ENCODE measurements at regions of chr1 and their contacts with region 1.

Region 1: DNA sequence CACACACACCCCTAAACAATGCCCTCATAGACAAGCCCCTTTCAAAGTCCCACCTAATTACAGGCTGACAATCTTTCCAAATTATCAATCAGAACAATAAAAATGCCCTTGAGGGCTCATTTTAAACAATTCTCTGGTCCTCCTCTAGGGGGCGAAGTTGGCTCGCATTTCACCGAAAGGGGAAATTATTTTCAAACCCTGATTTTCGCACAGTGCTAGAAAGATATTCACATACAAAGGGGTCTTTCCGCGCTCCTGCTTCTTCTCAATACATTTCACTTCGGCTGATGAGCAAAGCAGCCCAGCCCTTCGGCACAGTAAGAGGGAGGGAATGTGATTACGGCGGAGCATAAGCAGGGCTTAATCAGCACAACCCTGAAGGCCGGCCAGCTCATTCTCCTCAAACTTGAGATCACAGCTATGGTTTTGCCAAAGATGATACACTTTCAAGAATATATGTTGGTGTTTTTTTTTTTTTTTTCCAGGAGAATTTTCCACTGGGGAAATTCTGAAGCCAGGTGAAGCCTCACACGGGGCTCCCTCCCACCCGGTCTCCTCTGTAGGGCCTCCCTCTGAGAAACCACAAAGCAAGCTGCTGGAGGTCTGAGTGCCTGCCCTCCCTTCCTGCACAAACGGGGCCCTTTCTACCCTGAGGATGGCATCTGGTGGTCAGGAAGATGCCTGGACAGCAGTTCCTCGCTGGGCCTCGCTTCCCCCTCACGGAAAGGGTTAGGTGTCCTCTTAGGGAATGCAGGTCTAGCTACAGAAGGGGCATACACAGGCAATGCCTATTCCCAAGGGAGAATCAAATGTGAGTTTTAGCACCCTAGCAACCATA is 66.9 kb downstream of the GNG12 start:
- DNase-seq: peak in 1 of 2 experiments; percentile 53
- ATAC-seq: peak; percentile 69 to 78
- H3K4me3 ChIP-seq: no peak overlapping the region; the same call in 2 of the 3 replicates
- H3K27ac ChIP-seq: peak overlapping the region; percentile 76 to 92
- H3K4me1 ChIP-seq: peaks cover 77% of the 10 kb centered on the region
- CTCF ChIP-seq: peak; percentile 76
- EP300 ChIP-seq: no peak
- POLR2A ChIP-seq: no peak
- RAD21 ChIP-seq: peak; percentile 83 to 89

Region 2: DNA sequence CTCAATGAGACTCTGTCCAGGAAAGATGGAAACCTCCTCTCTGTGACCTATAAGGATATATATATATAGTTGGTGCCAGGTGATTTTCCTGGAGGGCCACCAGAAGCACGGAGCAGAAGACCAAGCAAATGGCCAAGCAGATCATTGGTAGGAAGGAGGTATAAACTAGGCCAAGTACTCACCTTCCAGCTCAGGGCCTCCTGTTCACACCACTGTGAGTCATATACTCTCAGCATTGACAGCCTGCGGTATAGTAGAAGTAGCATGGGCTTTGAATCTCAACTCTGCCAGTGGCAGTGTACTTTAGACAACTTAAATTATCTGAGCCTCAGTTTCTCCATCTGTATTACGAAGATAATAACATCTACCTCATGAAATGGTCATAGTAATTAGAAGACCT is 443.3 kb before region 1 on chr1:
- CTCF ChIA-PET with region 1: no interaction called
- POLR2A ChIA-PET with region 1: no interaction called
- DNase-seq: no peak
- ATAC-seq: no peak
- H3K4me3 ChIP-seq: no peak overlapping the region
- H3K27ac ChIP-seq: no peak overlapping the region
- H3K4me1 ChIP-seq: no peaks in the 10 kb centered on the region
- CTCF ChIP-seq: no peak
- EP300 ChIP-seq: no peak
- POLR2A ChIP-seq: no peak
- RAD21 ChIP-seq: no peak

Region 3: GRCh38 chr1:67418839-67419586 is 347.3 kb before region 1 on chr1:
- CTCF ChIA-PET with region 1: no interaction called
- POLR2A ChIA-PET with region 1: no interaction called
- DNase-seq: no peak
- ATAC-seq: no peak
- H3K4me3 ChIP-seq: no peak overlapping the region
- H3K27ac ChIP-seq: no peak overlapping the region
- H3K4me1 ChIP-seq: no peaks in the 10 kb centered on the region
- CTCF ChIP-seq: no peak
- EP300 ChIP-seq: no peak
- POLR2A ChIP-seq: no peak
- RAD21 ChIP-seq: no peak

Region 4: DNA sequence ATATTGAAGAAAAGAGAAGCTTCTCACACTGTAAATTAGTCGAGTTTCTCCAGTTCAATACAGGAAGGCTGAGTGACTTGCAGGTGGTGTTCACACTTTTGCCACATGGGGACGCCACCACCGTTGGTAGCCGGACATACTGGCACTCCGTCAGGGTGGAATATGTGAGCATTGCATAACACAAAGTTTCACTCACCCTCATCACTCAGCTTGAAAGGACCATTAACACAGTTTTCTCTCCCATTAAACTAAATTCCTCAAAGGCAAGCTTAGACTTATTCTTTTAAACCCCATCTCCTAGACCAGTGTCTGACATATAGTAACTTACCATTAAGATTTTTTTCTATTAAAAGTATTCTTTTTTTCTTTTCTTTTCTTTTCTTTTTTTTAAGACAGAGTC is 230.9 kb before region 1 on chr1:
- CTCF ChIA-PET with region 1: interaction called, 197 read pairs
- POLR2A ChIA-PET with region 1: no interaction called
- DNase-seq: peak; percentile 55 to 78
- ATAC-seq: peak; percentile 91 to 92
- H3K4me3 ChIP-seq: no peak overlapping the region
- H3K27ac ChIP-seq: peak overlapping the region; percentile 51 to 54; a peak in 4 of 6 replicates
- H3K4me1 ChIP-seq: peaks cover 16% of the 10 kb centered on the region; the same call in 2 of the 3 replicates
- CTCF ChIP-seq: peak; percentile 78
- EP300 ChIP-seq: no peak
- POLR2A ChIP-seq: no peak
- RAD21 ChIP-seq: peak; percentile 78 to 86

Region 5: DNA sequence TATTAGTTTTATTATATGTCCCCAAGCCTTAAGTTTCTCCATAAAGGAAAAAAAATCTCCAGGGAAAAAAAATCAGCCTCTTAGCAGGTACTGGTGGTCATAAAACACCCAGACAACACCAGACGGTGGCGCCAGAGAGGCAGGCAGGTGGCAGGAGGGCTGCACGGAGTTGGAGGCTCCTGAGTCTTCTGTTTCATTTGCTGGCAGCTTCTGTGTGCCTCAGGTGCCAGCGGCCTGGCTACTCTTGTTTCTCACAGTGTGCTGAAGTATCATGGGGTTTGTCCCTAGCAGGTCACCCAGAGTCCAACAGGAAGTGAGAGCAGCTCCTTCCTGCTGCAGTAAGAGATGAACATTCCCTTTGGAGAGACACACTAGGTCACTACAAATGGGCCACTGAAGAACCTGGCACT is 204.7 kb before region 1 on chr1:
- CTCF ChIA-PET with region 1: interaction called, 63 read pairs
- POLR2A ChIA-PET with region 1: no interaction called
- DNase-seq: peak; percentile 49 to 82
- ATAC-seq: peak; percentile 91 to 95
- H3K4me3 ChIP-seq: no peak overlapping the region
- H3K27ac ChIP-seq: peak overlapping the region; percentile 60 to 73; a peak in 4 of 6 replicates
- H3K4me1 ChIP-seq: peaks cover 20% of the 10 kb centered on the region
- CTCF ChIP-seq: peak; percentile 76
- EP300 ChIP-seq: no peak
- POLR2A ChIP-seq: no peak
- RAD21 ChIP-seq: peak; percentile 85 to 87

Region 6: DNA sequence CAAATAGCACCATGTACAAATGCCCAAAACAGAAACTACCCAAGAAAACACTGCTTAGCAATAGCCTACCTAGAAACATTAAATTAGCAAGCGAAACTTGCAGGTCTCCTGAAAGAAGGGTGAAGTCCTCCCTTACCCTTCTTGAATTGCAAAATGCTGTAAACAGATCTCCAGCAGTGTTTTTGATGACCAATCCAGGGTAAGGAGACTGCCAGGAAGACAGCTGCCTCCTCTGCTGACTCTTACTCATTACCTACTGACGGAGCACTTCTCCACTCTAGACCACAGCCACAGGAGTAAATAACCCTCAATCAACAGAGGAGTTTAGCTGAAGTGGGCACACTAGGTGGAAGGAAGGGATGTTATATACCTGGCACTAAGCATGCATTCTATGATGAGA is 113.6 kb before region 1 on chr1:
- CTCF ChIA-PET with region 1: no interaction called
- POLR2A ChIA-PET with region 1: no interaction called
- DNase-seq: peak in 1 of 2 experiments; percentile 29
- ATAC-seq: peak; percentile 82 to 94
- H3K4me3 ChIP-seq: no peak overlapping the region
- H3K27ac ChIP-seq: peak overlapping the region in 1 of 2 experiments; percentile 51; a peak in 2 of 6 replicates
- H3K4me1 ChIP-seq: peaks cover 12% of the 10 kb centered on the region
- CTCF ChIP-seq: no peak
- EP300 ChIP-seq: no peak
- POLR2A ChIP-seq: no peak
- RAD21 ChIP-seq: no peak

Region 7: GRCh38 chr1:67785847-67786753 is 19.7 kb after region 1 on chr1:
- CTCF ChIA-PET with region 1: interaction called, 24 read pairs
- POLR2A ChIA-PET with region 1: no interaction called
- DNase-seq: no peak
- ATAC-seq: no peak
- H3K4me3 ChIP-seq: no peak overlapping the region
- H3K27ac ChIP-seq: peak overlapping the region in 1 of 2 experiments; percentile 56; a peak in 3 of 6 replicates
- H3K4me1 ChIP-seq: peaks cover 56% of the 10 kb centered on the region
- CTCF ChIP-seq: no peak
- EP300 ChIP-seq: no peak
- POLR2A ChIP-seq: no peak
- RAD21 ChIP-seq: no peak

Region 8: DNA sequence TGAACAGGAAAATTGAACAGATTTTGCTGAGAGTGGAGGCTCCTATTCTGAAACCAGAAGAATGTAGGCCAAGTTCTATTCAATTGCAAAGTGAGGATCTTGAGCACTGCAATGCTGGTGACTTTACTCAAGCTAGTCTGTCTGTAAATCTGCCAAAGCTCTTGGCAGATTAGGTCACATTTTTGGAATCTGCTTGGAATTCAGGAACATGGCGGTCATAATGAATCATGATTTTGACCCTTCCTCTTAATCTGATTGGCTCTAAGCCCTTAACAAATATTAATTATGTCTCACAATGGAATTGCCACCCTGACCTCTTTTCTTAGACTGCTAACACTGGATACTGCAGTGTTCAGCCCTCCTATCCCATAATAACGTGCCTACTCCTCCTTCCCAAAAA is 74.1 kb after region 1 on chr1:
- CTCF ChIA-PET with region 1: interaction called, 27 read pairs
- POLR2A ChIA-PET with region 1: no interaction called
- DNase-seq: peak in 1 of 2 experiments; percentile 42
- ATAC-seq: peak; percentile 39 to 74; a peak in 3 of 6 replicates
- H3K4me3 ChIP-seq: no peak overlapping the region
- H3K27ac ChIP-seq: peak overlapping the region in 1 of 2 experiments; percentile 53; a peak in 3 of 6 replicates
- H3K4me1 ChIP-seq: peaks cover 50% of the 10 kb centered on the region
- CTCF ChIP-seq: no peak
- EP300 ChIP-seq: no peak
- POLR2A ChIP-seq: no peak
- RAD21 ChIP-seq: no peak

Region 9: DNA sequence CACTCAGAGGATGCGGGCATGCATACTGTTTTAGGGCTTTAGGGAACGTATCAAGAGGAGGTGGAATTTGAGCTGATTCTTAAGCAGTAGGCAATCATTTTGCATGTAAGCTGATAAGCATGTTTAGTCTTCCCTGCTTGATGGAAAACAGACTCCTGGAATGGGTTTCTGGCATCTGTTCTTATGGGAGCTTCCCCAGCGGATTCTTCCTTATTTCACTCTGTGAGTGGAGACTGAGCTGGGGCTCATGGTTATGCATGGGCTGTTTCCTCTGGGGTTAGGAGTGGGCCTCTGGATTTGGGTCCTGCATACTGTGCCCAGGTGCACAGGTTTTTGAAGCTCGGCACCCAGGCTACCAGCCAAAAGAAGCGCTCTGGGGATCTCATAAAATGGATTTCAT is 190.7 kb after region 1 on chr1:
- CTCF ChIA-PET with region 1: no interaction called
- POLR2A ChIA-PET with region 1: no interaction called
- DNase-seq: no peak
- ATAC-seq: no peak
- H3K4me3 ChIP-seq: no peak overlapping the region
- H3K27ac ChIP-seq: no peak overlapping the region
- H3K4me1 ChIP-seq: 0 out of 3 replicates have a peak, but pooled peaks cover 5% of the 10 kb centered on the region
- CTCF ChIP-seq: no peak
- EP300 ChIP-seq: no peak
- POLR2A ChIP-seq: no peak
- RAD21 ChIP-seq: no peak

Region 10: DNA sequence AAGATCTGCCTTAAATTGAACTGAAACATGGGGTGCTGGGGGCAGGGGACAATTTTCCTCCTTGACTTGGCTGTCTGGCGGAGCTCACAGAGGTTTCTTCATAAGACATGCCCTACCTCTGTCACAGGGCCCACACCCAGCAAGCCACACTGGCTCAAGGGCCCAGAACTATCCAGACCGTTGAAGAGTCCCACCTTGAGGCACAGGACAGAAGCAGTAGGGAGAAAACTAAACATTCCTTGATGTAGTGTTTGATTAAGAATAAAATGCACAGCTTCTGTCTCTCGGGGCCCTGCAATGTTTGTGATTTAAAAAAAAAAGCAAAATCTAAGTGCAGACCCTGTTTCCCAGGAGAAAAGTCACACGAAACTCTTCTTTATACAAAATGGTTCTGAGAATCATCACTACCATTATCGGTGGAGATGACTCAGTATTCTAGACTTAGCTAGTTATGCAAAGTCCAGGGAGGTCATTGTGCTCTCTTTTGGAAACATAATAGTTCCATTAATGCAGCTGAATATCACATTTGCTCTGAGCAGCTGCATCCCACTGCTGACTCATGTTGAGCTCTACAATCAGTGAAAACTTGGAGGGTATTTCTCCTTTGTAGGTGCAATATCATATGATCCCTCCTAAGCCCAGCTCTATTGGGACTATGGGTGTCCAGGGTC is 337.7 kb after region 1 on chr1:
- CTCF ChIA-PET with region 1: interaction called, 22 read pairs
- POLR2A ChIA-PET with region 1: no interaction called
- DNase-seq: no peak
- ATAC-seq: no peak
- H3K4me3 ChIP-seq: no peak overlapping the region
- H3K27ac ChIP-seq: peak overlapping the region in 1 of 2 experiments; percentile 74; a peak in 3 of 6 replicates
- H3K4me1 ChIP-seq: peaks cover 10% of the 10 kb centered on the region; the same call in 2 of the 3 replicates
- CTCF ChIP-seq: no peak
- EP300 ChIP-seq: no peak
- POLR2A ChIP-seq: no peak
- RAD21 ChIP-seq: no peak

Region 11: GRCh38 chr1:68120136-68120791 is 353.9 kb after region 1 on chr1:
- CTCF ChIA-PET with region 1: interaction called, 25 read pairs
- POLR2A ChIA-PET with region 1: no interaction called
- DNase-seq: peak; percentile 31 to 66
- ATAC-seq: peak; percentile 67 to 84; a peak in 4 of 6 replicates
- H3K4me3 ChIP-seq: no peak overlapping the region
- H3K27ac ChIP-seq: no peak overlapping the region
- H3K4me1 ChIP-seq: peaks cover 6% of the 10 kb centered on the region
- CTCF ChIP-seq: peak; percentile 71
- EP300 ChIP-seq: no peak
- POLR2A ChIP-seq: no peak
- RAD21 ChIP-seq: peak; percentile 85 to 86

Measured in A549 (cell line).